ENCODE measurements at regions of chr14 and their contacts with region 1.

Region 1: DNA sequence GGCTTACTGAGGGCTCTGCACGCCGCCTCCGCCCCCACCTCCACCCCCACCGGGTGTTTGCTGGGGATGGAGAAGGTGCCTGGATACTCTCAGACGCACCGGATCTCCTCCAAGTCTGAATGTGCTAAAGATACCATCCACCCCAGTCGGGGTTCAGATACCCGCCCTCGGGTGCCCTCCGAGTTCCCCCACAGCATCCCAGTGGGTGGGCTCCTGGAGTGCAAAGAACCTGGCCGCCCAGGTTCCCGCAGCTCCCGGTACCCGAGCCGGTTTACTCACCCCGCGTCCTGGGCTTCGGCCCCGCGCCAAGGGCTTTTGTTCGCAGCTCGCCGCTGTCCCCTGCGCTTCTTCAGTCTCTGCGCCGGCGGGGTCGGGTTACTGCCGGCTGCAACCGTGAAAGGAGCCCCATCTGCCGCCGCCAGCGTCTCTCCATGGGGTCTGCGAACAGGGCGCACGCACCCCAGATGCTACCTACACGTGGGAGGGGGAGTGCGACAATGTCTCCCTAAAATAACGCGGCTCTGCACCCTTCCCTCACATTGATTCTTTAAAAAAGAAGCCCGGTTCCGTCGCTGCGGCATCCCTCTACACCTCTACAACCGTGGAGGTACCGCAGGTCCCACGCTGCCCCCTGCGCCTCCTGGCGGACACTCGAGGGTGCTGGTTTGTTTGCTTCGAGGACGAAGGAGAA is at the start of gene CCDC177:
- DNase-seq: peak; percentile 92
- H3K4me3 Mint-ChIP-seq: peak within 1 kb of the TSS; percentile 69
- H3K27ac Mint-ChIP-seq: no peak within 1 kb of the TSS
- H3K4me1 Mint-ChIP-seq: peaks cover 6% of the 10 kb centered on the region
- H3K27me3 Mint-ChIP-seq: peaks cover 69% of the 10 kb centered on the region
- total RNA-seq, gene CCDC177: 0.05 TPM in 1 of 2 replicates, not detected in the other

Region 2: GRCh38 chr14:69242311-69243224 is 331.8 kb before region 1 on chr14:
- intact Hi-C with region 1: loop called (anchors 1 kb)
- DNase-seq: peak; percentile 85
- H3K4me3 Mint-ChIP-seq: no peak overlapping the region
- H3K27ac Mint-ChIP-seq: no peak overlapping the region
- H3K4me1 Mint-ChIP-seq: no peaks in the 10 kb centered on the region
- H3K27me3 Mint-ChIP-seq: peaks cover 1% of the 10 kb centered on the region

Region 3: GRCh38 chr14:69260861-69261564 is 313.4 kb before region 1 on chr14:
- intact Hi-C with region 1: loop called (anchors 5 kb)
- DNase-seq: peak; percentile 82
- H3K4me3 Mint-ChIP-seq: peak overlapping the region; percentile 79
- H3K27ac Mint-ChIP-seq: no peak overlapping the region
- H3K4me1 Mint-ChIP-seq: peaks cover 4% of the 10 kb centered on the region
- H3K27me3 Mint-ChIP-seq: peaks cover 68% of the 10 kb centered on the region

Region 4: DNA sequence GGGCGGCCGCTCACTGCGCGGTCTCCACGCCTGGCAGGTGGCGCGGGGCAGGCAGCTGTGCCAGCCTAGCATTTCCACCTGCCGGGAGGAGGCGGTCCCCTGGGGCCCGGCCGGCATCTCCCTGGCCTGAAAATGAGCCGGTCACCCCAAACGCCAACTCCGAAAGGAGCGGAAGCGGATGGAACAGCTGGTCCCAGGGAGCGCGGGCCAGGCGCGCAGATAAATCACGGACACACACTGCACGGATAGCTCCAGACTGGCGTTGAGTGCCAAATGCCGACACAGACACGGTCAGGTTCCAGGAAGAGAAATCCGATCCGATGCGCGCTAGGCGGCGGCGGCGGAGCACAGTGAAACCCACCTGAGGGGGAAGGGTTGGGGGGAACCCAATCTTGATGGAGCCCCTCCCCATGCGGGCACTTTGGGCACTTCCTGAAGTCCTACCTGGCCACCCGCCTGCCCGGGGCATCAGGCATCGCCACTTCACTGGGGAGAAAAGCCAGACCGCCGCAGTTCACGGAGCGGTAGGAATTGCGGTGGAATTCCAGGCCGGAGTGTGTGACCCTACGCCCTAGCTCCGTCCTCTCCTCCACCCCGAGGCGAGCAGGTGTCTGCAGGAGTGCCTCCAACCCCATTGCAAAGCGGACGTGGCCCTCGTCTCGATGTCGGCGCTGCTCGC is 90.5 kb before region 1 on chr14:
- intact Hi-C with region 1: loop called (anchors 5 kb)
- DNase-seq: no peak
- H3K4me3 Mint-ChIP-seq: no peak overlapping the region
- H3K27ac Mint-ChIP-seq: no peak overlapping the region
- H3K4me1 Mint-ChIP-seq: no peaks in the 10 kb centered on the region
- H3K27me3 Mint-ChIP-seq: peaks cover 58% of the 10 kb centered on the region

Measured in activated CD4-positive, alpha-beta T cell treated with anti-CD3 and anti-CD28 coated beads, Interleukin-2, amount 10 ng/mL, durations not matched to agents 24 days and 14 days (primary cell).